RWPE1 (cell line): ENCODE measurements at regions of chr11 and their contacts with region 1.

Region 1: DNA sequence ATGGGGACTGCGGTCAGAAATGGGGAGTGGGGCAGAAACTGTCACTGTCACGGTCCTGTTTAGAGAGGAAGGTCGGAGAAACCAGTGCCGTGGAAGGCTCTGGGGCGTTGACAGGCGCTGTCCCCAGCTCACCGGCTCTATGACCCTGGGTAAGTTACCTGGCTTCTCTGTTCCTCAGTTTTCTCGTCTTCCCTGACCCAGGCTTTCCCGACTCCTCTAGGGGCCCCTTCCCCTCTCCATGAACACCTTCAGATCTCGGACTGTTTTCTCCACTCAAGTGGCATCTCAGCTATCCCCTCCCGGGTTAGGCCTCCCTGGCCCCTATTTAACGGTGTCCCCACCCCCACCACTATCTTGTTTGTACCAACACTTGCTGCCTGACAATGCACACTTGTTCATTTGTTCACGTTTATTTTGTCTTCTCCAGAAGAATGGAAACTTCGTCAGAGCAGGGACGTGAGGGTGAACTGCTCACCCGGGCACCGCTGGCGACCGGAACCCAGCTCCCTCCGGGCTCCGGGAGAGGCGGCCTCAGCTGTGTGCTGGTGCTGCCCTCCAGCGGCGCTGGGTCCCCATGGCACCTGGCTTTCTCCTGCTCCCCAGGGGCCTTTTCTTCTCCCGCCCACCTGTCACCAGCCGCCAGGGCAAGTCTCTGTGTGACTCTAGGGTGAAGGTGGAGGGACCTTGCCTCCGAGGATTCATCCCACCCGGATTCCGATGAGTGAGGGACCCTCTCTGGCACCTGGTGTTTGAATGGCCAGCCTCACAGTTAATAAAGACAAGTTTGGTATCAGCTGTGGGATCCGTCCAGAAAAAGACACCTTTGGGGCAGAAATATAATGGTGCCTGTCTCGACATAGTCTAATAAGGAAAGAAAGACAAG is 33.1 kb upstream of the SLC35C1 start:
- DNase-seq: peak; percentile 93
- H3K27ac ChIP-seq: no peak overlapping the region
- CTCF ChIP-seq: peak; percentile 92

Region 2: DNA sequence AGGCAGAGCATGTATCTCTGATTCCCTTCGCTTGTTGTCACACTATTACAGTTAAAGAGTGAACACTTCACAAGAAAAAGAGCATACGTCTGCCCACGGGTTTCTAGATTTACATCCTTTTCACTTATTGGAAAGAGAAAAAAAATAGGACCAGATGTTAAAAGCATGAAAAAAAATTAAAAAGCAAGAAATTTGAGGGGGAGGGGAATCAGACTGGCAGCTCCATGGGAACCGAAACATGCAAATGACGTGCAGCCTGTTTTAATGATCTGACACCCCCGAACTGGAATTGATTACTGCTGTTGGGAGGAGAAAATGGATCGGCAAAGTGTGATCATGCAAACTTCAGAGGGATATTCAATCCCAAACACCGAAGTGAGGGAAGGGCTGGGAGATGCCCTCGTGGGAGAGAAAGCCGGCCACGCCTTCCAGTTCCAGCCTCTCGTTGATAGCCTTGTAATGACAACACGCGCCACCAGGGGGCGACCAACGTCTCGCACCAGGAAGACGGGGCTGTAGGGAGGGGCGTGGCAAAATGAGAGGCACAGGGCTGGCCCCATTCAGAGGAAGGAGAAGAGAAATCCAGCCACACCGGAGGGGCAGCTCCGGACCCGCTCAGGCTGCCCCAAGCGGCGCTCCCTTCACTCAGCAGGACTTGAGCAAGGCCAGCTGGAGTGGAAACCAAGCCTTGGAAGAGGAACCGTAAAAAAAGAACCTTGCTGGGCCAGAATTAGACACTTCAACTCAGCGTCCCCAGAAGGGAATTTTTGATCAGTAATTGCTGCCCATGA is 431.9 kb before region 1 on chr11:
- CTCF ChIA-PET with region 1: interaction called, 19 read pairs
- POLR2A ChIA-PET with region 1: no interaction called
- DNase-seq: peak; percentile 91
- H3K27ac ChIP-seq: no peak overlapping the region
- CTCF ChIP-seq: peak; percentile 87

Region 3: DNA sequence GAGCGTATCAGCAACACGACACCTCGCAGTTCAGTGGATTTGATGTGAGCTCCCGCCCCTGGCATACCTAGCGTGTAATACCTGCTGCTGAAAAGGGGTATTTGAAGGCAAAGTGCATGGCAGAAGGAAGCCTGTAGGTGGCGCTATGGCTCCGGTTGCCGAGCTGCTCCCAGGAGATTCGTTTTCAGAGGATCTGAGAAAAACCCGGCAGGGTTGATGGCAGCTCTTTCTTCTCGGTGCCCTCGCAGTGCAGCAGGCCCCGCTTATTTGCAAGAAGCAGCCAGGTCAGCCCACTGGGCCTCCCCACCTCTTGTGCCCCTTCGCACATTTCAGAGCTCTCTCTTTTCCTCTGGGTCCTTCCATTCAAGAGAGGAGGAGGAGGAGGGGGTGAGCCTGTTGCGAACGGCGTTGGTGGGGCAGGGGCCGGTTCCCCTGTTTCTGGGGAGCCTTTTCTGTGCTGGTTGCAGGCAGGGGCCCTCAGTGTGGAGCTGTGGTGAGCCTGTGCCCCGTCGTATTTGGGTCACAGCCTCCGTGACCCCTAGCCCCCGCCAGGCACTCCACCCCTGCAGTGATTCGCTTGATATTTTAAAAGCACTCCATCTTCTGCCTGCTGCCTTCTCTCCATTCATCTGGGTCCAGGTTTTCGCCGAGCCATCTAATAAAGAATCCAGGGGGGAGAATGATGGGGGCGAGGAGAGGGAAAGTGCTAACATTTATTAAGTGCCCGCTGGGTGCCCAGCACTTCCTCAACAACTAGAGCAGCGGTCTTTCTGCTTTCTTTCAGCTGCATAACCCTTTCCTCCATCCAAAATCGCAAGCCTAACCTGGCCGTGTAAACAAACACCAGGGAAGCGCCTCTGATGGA is 400.3 kb before region 1 on chr11:
- CTCF ChIA-PET with region 1: interaction called, 18 read pairs
- POLR2A ChIA-PET with region 1: no interaction called
- DNase-seq: peak; percentile 73
- H3K27ac ChIP-seq: no peak overlapping the region
- CTCF ChIP-seq: peak; percentile 69

Region 4: GRCh38 chr11:45655347-45655756 is 116.5 kb before region 1 on chr11:
- CTCF ChIA-PET with region 1: interaction called, 15 read pairs
- POLR2A ChIA-PET with region 1: no interaction called
- DNase-seq: peak; percentile 80
- H3K27ac ChIP-seq: no peak overlapping the region
- CTCF ChIP-seq: peak; percentile 95

Region 5: DNA sequence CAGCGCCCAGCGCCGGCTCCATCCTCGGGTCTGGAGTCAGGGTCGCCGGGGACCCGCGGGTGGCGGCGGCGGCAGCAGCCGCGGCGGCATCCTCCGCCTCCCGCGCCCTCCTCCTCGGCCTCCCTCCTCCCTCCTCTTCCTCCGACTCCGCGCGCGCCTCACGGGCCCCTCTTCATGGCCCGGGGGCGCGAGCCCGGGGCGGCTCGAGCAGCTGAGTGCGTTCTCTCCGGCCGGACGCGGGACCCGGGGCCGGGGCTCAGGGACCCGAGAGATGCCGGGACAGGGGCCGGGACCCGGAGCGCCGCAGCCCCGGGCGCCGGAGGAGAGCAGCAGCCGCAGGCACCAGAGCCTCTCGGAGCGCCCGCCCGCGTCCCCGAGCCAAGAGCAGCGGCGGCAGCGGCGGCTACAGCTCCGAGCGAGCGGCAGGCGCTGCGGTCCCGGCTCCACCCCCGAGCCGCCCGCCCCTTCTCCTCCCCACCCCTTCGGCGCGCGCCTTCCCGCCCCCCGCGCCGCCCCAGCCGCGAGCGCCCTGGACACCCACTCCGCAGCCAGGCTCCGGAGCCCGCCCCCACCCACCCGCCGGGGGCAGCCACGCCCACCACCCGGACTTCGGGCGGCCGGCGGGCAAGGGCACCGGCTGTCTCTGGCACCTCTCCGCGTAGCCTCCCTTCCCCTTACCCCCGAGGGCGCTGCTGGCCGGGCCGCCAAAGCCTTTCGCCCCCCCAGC is 106.4 kb before region 1 on chr11 and contains the start of gene CHST1:
- CTCF ChIA-PET with region 1: interaction called, 11 read pairs
- POLR2A ChIA-PET with region 1: no interaction called
- DNase-seq: no peak
- H3K27ac ChIP-seq: no peak within 1 kb of the TSS
- CTCF ChIP-seq: no peak

Region 6: GRCh38 chr11:45960387-45961095 is 188.7 kb after region 1 on chr11:
- CTCF ChIA-PET with region 1: no interaction called
- POLR2A ChIA-PET with region 1: no interaction called
- DNase-seq: no peak
- H3K27ac ChIP-seq: no peak overlapping the region
- CTCF ChIP-seq: no peak

Region 7: GRCh38 chr11:47130543-47130942 is 1358.7 kb after region 1 on chr11:
- CTCF ChIA-PET with region 1: no interaction called
- POLR2A ChIA-PET with region 1: no interaction called
- DNase-seq: no peak
- H3K27ac ChIP-seq: no peak overlapping the region
- CTCF ChIP-seq: no peak